ENCODE measurements at regions of chr1 and their contacts with region 1.

Region 1: DNA sequence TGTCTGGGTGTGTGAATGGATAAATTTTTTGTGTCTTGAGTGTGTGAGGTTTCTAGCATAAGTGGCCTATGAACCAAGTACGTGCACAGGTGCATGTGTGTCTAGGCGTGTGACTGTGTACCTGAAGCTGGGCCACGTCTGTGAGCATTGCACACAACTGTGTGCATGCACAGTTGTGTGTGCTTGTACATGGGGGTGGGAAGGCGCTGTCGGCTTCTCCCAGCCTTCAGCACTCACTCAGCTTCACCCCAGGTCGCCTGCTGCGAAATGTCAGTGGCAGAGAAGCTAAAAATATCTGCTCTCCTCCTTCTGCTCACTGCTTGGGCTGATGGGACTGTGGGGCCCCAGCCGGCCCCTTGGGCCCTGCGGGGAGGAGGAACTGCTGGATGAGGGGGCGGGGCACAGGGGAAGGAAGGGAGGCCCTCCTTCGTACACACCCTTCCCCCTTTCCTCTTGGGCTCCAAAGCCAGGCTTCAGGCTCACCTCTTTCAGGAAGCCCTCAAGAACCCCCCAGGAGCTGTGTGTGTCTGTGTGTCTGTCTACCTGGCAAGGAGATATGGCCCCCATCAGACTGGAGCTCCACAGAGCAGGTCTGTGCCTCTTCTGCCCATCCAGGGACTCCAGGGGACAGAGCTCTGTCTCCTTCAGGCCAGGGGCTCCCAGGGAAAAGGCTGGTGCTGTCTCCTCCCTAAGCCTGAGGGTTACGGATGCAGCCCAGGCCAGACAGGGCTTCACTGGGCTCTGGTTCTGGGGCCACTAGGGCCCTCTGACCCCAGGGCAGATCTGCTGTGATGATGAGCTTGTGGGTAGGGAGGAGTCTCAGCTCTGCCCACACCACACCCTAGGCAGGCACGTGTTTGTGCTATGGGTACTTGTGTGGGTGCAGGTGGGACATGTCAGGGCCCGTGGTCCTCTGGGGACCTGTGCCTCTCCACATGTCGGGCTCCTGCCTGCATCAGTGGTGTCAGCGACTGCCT is 35.6 kb upstream of the WASF2 start:
- DNase-seq: peak; percentile 47 to 69
- ATAC-seq: peak in 1 of 2 donors; percentile 7
- H3K4me3 ChIP-seq: peak overlapping the region; percentile 4 to 34 (median 24)
- H3K27ac ChIP-seq: peak overlapping the region; percentile 86 to 95 (median 90)
- H3K4me1 ChIP-seq: peaks cover 82 to 89% of the 10 kb centered on the region in 2 donors
- H3K27me3 ChIP-seq: no peaks in the 10 kb centered on the region
- CTCF ChIP-seq: no peak
- POLR2A ChIP-seq: peak in 1 of 2 donors; percentile 9

Region 2: GRCh38 chr1:27402349-27402754 is 123.2 kb before region 1 on chr1:
- in situ Hi-C with region 1: loop called in 2 of 4 experiments (anchors 25 kb)
- intact Hi-C with region 1: loop called (anchors 10 kb)
- DNase-seq: peak; percentile 57 to 83
- ATAC-seq: peak; percentile 37 to 51
- H3K4me3 ChIP-seq: no peak overlapping the region
- H3K27ac ChIP-seq: peak overlapping the region; percentile 68 to 78 (median 72)
- H3K4me1 ChIP-seq: peaks cover 50 to 57% of the 10 kb centered on the region in 2 donors
- H3K27me3 ChIP-seq: no peaks in the 10 kb centered on the region
- CTCF ChIP-seq: peak; percentile 47 to 74 (median 70)
- POLR2A ChIP-seq: no peak

Region 3: GRCh38 chr1:27416387-27417111 is 109.0 kb before region 1 on chr1:
- in situ Hi-C with region 1: loop called in 2 of 4 experiments (anchors 25 kb)
- intact Hi-C with region 1: no loop called
- DNase-seq: no peak
- ATAC-seq: peak; percentile 41 to 47
- H3K4me3 ChIP-seq: no peak overlapping the region
- H3K27ac ChIP-seq: peak overlapping the region in 3 of 4 donors; percentile 77 to 86 (median 81)
- H3K4me1 ChIP-seq: peaks cover 33 to 47% of the 10 kb centered on the region in 2 donors
- H3K27me3 ChIP-seq: no peaks in the 10 kb centered on the region
- CTCF ChIP-seq: peak; percentile 38 to 71 (median 70)
- POLR2A ChIP-seq: no peak

Region 4: GRCh38 chr1:27568300-27569087 is 42.9 kb after region 1 on chr1:
- in situ Hi-C with region 1: no loop called
- intact Hi-C with region 1: loop called (anchors 2 kb)
- DNase-seq: peak; percentile 95 to 98
- ATAC-seq: peak; percentile 30 to 42
- H3K4me3 ChIP-seq: peak overlapping the region; percentile 30 to 52 (median 38)
- H3K27ac ChIP-seq: peak overlapping the region; percentile 95 to 100 (median 98)
- H3K4me1 ChIP-seq: peaks cover 95 to 96% of the 10 kb centered on the region in 2 donors
- H3K27me3 ChIP-seq: no peaks in the 10 kb centered on the region
- CTCF ChIP-seq: peak; percentile 68 to 92 (median 89)
- POLR2A ChIP-seq: peak; percentile 77 to 82